ENCODE measurements at regions of chr1 and their contacts with region 1.

Region 1: DNA sequence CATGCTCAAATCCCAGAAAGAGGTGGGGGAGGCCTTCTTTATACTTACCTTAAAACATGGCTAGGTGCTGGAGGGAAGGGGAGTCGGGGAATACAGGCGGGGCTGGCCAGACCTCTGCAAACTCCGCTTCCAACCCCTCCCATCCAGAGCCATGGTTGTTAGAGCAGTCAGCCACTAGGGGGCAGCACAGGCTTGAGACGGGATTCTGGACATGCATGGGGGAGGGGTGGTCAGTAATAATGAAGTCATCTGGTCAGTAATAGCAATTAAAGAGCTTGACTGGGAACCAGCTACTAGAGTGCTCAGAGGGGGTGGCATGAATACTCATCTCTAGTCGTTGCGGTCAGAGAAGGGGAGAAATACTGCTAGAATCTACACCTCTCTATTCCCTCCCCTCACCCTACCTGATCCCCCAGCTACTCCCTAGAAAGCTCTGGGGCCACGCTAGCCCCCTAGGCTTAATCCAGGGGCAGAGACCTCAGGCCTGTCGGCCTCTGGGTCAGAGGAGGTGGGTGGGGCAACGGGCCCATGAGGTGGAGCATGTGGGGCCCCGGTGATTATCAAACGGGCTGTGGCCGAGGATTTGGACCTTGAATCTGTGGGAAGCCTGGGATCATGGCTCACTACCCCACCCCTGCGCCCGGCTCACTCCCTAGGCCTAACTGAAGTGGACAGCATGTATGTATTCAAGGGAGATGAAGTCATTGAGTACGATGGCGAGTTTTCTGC is 2.9 kb downstream of the CASQ1 start:
- DNase-seq: peak; percentile 96
- ATAC-seq: peak; percentile 88
- H3K4me3 Mint-ChIP-seq: no peak overlapping the region
- H3K27ac Mint-ChIP-seq: no peak overlapping the region
- H3K4me1 Mint-ChIP-seq: peaks cover 13% of the 10 kb centered on the region
- H3K27me3 Mint-ChIP-seq: no peaks in the 10 kb centered on the region; the same call in 1 of the 2 replicates
- CTCF ChIP-seq: peak; percentile 95

Region 2: DNA sequence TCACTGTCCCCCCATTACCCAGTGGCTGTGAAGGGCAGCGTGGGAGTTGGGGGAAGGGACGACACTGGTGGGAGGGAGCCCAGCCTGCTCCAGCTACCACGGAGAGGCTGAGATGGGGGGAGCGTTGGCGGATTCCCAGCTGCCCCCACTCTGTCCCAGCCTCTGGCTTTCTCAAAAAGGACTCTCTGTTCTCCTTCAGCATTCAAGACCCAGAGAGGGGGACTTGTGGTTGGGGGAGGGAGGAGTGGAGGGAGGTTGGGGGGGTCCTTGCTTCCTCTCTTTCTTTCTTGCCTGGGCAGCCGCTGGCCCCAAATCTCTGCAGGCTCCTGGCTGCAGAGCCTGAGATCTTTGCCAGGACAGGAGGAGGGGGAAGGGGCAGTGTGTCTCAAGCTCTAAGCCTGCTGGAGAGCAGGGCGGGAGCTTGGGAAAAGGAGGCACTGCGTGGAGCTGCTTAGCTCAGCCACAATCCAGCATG is 75.5 kb before region 1 on chr1:
- CTCF ChIA-PET with region 1: interaction called, 15 read pairs
- POLR2A ChIA-PET with region 1: no interaction called
- DNase-seq: no peak
- ATAC-seq: peak; percentile 40; the same call in 1 of the 2 replicates
- H3K4me3 Mint-ChIP-seq: 0 out of 2 replicates have a peak overlapping the region, but pooled peaks have one; percentile 16
- H3K27ac Mint-ChIP-seq: no peak overlapping the region
- H3K4me1 Mint-ChIP-seq: peaks cover 58% of the 10 kb centered on the region
- H3K27me3 Mint-ChIP-seq: peaks cover under 1% of the 10 kb centered on the region; the same call in 1 of the 2 replicates
- CTCF ChIP-seq: no peak

Region 3: DNA sequence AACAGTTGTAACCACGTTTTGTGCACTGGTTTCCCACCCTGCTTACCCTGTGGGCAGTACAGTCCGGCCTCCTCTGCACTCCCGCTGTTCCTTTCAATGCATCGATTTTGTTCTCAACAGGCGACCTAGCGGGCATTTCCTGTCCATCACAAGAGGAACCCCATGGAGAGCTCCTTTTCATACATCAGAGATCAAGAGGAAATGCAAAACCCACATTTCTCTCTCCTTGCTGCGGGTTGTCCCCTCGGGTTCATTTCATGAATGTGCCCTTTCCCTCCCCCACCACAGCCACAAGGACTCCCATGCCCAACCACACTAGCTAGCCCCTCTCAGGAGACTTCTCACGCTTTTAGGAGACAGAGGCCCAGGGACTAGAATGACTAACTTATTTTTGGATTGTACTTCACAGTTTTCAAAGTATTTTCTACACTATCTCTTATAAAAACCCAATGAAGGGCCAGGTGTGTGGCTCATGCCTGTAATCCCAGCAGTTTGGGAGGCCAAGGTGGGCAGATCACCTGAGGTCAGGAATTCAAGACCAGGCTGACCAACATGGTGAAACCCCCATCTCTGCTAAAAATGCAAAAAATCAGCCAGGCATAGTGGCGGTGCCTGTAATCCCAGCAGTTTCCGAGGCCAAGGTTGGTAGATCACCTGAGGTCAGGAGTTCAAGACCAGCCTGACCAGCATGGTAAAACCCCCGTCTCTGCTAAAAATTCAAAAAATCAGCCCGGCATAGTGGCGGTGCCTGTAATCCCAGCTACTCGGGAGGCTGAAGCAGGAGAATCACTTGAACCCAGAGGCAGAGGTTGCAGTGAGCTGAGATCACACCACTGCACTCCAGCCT is 23.5 kb before region 1 on chr1:
- CTCF ChIA-PET with region 1: interaction called, 58 read pairs
- POLR2A ChIA-PET with region 1: interaction called, 4 read pairs
- DNase-seq: peak; percentile 75
- ATAC-seq: peak; percentile 78
- H3K4me3 Mint-ChIP-seq: peak overlapping the region; percentile 42
- H3K27ac Mint-ChIP-seq: peak overlapping the region; percentile 94
- H3K4me1 Mint-ChIP-seq: peaks cover 64% of the 10 kb centered on the region
- H3K27me3 Mint-ChIP-seq: peaks cover 25% of the 10 kb centered on the region
- CTCF ChIP-seq: no peak

Region 4: DNA sequence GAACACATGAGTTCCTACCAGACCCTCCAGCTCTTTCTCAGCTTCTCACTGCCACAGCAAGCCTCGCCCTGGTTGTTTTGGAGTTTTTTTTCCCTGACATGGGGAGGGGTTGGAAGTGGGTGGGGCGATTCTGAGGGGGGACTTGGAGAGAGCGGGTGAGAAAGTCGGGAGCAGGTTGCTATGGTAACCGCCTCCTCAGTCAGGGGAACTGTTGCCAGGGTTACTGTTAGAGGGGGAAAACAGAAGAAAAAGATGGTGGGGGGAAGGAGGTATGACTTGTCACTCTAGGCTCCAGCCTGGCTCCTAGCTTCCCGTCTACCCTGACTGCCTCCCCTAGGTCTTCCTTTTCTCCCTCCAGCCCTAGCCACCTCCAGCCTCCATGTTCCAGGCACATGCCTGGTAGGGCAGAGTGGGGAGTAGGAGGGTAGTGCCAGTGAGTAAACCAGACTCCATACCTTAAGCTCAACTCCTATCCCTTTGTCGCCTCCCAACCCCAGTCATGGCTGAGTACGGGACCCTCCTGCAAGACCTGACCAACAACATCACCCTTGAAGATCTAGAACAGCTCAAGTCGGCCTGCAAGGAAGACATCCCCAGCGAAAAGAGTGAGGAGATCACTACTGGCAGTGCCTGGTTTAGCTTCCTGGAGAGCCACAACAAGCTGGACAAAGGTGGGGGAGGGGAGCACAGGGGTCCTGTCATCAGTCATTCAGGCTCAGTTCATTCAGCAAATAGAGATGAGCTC is 18.0 kb after region 1 on chr1:
- CTCF ChIA-PET with region 1: interaction called, 85 read pairs
- POLR2A ChIA-PET with region 1: interaction called, 3 read pairs
- DNase-seq: peak; percentile 39
- ATAC-seq: no peak
- H3K4me3 Mint-ChIP-seq: no peak overlapping the region
- H3K27ac Mint-ChIP-seq: no peak overlapping the region
- H3K4me1 Mint-ChIP-seq: peaks cover 50% of the 10 kb centered on the region
- H3K27me3 Mint-ChIP-seq: no peaks in the 10 kb centered on the region
- CTCF ChIP-seq: no peak

Region 5: GRCh38 chr1:160243767-160244166 is 50.5 kb after region 1 on chr1:
- CTCF ChIA-PET with region 1: interaction called, 14 read pairs
- POLR2A ChIA-PET with region 1: no interaction called
- DNase-seq: no peak
- ATAC-seq: no peak
- H3K4me3 Mint-ChIP-seq: no peak overlapping the region
- H3K27ac Mint-ChIP-seq: peak overlapping the region; percentile 59; the same call in 1 of the 2 replicates
- H3K4me1 Mint-ChIP-seq: peaks cover 2% of the 10 kb centered on the region; the same call in 1 of the 2 replicates
- H3K27me3 Mint-ChIP-seq: no peaks in the 10 kb centered on the region
- CTCF ChIP-seq: no peak

Region 6: DNA sequence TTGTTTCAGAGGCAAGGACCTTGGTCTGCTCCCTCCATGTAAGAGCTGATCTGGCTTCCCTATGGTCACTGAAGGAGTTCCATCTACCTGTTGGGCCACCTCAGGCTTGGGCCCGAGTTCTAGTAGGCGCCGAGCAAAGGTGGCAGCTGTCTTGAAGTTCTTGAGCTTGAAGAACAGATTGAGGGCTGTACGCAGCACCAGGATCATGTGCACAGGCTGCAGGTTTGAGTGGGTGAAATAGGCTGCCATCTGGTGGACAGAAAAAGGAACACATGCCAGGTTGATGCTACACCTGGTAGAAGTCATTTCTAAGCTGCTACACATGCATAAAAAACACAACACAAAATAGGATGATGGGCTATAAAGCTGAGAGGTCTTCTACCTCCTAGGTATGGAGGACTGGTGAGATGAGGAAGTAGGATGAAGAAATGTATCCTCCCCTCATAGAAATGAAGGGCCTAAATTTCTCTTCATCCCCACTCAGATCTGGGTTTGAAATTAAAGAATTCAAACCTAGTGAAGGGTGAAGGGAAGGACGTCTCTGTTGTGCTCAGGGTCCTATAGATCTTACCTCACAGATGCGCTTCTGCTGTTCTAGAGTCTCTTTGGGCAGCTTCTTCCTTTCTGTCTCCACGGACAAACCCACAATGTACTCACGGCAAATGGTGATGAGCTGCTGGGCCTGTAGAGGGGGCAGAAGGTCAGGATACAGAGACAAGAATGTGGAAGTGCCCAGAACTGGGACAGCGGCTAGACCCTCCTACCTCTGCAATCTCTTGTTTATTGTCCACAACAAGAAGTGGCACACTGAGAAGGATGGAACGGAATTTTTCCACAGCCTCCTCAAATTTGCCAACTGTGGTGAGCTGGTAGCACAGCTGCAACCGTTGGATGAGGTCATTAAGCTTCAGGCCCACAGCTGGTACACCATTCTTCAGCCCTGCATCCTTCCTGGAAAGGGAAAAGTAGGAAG is 98.3 kb after region 1 on chr1:
- CTCF ChIA-PET with region 1: interaction called, 24 read pairs
- POLR2A ChIA-PET with region 1: interaction called, 4 read pairs
- DNase-seq: peak; percentile 61
- ATAC-seq: peak; percentile 95
- H3K4me3 Mint-ChIP-seq: no peak overlapping the region
- H3K27ac Mint-ChIP-seq: no peak overlapping the region
- H3K4me1 Mint-ChIP-seq: peaks cover 2% of the 10 kb centered on the region
- H3K27me3 Mint-ChIP-seq: no peaks in the 10 kb centered on the region
- CTCF ChIP-seq: peak; percentile 66

Region 7: GRCh38 chr1:160309180-160309530 is 115.9 kb after region 1 on chr1:
- CTCF ChIA-PET with region 1: no interaction called
- POLR2A ChIA-PET with region 1: no interaction called
- DNase-seq: no peak
- ATAC-seq: no peak
- H3K4me3 Mint-ChIP-seq: no peak overlapping the region
- H3K27ac Mint-ChIP-seq: peak overlapping the region; percentile 33; the same call in 1 of the 2 replicates
- H3K4me1 Mint-ChIP-seq: peaks cover 33% of the 10 kb centered on the region
- H3K27me3 Mint-ChIP-seq: no peaks in the 10 kb centered on the region
- CTCF ChIP-seq: no peak

Measured in WTC11 (cell line).